H1 (cell line): ENCODE measurements at regions of chr2 and their contacts with region 1.

Region 1: GRCh38 chr2:174051741-174052583 is 86.8 kb upstream of the SP3 start:
- DNase-seq: no peak
- H3K4me3 ChIP-seq: no peak overlapping the region
- H3K27ac ChIP-seq: no peak overlapping the region
- H3K4me1 ChIP-seq: peaks cover 4 to 18% (median 14%) of the 10 kb centered on the region in 4 experiments
- H3K27me3 ChIP-seq: no peaks in the 10 kb centered on the region
- CTCF ChIP-seq: no peak
- EP300 ChIP-seq: no peak
- POLR2A ChIP-seq: no peak
- RAD21 ChIP-seq: peak in 1 of 2 experiments; percentile 11; a peak in 2 of 4 replicates

Region 2: DNA sequence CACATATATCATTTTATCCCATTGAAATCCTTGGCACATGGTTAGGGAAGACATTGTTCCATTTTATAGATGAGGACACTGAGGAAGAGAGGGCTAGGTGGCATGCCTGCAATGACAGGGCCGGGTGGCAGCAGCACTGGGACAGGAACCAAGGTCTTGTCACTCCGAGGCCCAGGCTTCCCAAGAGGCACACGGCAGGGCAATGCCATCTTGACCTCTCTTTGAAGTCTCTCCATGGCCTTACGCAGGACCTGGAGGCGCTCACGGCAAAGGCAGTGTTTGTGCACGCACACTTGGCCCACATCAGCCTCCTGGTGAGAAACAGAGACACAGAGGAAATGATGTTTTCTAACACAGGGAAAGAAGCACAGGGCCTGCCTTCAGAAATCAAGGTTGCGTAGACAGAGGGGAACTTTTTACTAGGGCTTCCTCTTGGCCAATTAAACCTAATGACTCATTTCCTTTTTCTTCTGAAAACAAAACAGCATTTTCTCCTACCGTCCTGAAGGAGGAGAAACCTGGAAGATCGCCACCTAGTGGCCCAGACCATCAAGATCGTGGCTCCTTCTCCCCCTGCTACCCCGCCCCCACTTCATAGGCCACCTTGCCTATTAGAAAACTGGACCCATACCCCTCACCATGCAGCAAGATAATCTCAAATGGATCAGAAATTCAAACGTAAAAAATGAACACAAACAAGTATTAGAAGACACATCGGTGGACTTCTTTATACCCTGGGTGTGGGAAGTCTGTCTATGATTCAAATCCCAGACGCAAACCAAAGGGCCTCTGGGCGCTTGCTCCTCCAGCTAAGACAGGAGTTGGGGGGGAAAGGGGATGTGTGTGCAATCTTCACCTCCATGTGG is 12.2 kb before region 1 on chr2:
- CTCF ChIA-PET with region 1: interaction called, 16 read pairs
- POLR2A ChIA-PET with region 1: interaction called, 3 read pairs
- DNase-seq: peak; percentile 77 to 90
- H3K4me3 ChIP-seq: no peak overlapping the region
- H3K27ac ChIP-seq: 0 out of 2 replicates have a peak overlapping the region, but pooled peaks have one; percentile 39
- H3K4me1 ChIP-seq: peaks cover 4 to 7% (median 6%) of the 10 kb centered on the region in 4 experiments; a peak in 6 of 7 replicates
- H3K27me3 ChIP-seq: no peaks in the 10 kb centered on the region
- CTCF ChIP-seq: peak; percentile 83 to 90 (median 87)
- EP300 ChIP-seq: no peak
- POLR2A ChIP-seq: no peak
- RAD21 ChIP-seq: peak; percentile 61 to 70